ENCODE measurements at regions of chr11 and their contacts with region 1.

Region 1: DNA sequence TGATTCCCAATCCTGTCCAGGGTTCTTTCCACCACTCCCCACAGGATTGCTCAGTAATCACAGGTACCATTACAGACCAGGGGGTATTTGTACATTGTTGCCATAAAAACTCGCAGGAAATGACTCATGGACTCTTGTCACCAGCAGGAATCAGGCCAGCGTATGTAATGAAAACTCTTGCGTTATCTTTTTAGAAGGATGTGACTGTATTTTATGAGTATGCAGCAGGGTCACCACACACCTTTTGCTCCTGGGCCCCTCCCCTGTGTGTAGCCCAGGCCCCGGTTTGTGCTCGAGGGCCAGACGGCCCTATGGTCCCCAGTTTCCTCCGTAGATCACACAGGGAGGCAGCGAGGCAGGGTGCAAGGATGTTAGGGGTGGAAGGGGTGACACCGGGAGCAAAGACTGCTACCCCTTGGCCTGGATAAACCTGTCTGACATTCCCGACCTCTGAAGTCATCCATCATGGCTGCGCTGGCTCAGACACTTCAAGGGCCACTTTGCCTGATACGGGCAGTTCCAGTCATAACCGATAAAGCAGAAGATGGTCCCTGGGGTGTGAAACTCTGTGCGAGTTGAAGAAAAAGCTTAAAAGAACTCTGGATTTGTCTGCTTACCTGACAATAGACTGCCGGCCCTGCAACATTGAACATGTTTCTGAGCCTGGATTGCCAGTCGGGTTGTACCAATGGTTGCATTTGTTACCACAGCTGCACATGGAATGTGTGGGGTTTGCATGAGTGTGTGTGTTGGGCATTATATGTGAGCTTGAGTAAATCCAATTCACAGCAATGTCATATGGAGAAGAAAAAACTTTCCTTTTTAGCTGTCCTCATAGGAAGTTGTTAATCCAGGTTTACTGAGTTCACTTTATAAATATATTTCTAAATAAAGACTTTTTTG is 57.0 kb downstream of the MICAL2 start:
- DNase-seq: peak; percentile 98
- H3K4me3 ChIP-seq: no peak overlapping the region
- H3K27ac ChIP-seq: peak overlapping the region; percentile 95
- H3K4me1 ChIP-seq: peaks cover 68% of the 10 kb centered on the region
- H3K27me3 ChIP-seq: no peaks in the 10 kb centered on the region
- CTCF ChIP-seq: no peak

Region 2: DNA sequence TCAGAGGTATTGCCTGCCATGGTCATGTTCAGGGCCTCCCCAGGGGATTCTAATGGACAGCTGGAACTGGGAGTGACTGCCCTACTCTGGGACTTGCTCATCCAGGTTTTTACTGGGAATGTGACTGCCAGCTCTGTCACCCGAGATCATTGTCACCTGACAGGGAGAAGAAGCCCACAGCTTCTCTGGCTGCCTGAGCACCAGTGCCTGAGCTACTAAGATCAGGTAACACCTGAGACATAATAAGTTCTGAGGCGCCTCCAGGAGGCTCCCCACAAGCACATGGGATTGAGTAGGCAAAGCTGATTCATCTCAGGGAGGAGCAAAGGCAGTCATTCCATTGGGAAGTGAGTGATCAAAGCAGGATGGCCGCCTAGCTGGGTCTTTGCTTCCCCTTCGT is 461.3 kb before region 1 on chr11:
- CTCF ChIA-PET with region 1: no interaction called
- dilution Hi-C with region 1: no loop called
- in situ Hi-C with region 1: no loop called
- intact Hi-C with region 1: no loop called
- DNase-seq: peak; percentile 65
- H3K4me3 ChIP-seq: no peak overlapping the region
- H3K27ac ChIP-seq: no peak overlapping the region
- H3K4me1 ChIP-seq: peaks cover 4% of the 10 kb centered on the region
- H3K27me3 ChIP-seq: peaks cover 2% of the 10 kb centered on the region
- CTCF ChIP-seq: peak in 1 of 2 donors; percentile 27

Region 3: GRCh38 chr11:12182676-12183541 is 15.6 kb after region 1 on chr11:
- CTCF ChIA-PET with region 1: no interaction called
- dilution Hi-C with region 1: no loop called
- in situ Hi-C with region 1: no loop called
- intact Hi-C with region 1: loop called (anchors 2 kb)
- DNase-seq: peak; percentile 90
- H3K4me3 ChIP-seq: no peak overlapping the region
- H3K27ac ChIP-seq: peak overlapping the region; percentile 96
- H3K4me1 ChIP-seq: peaks cover 80% of the 10 kb centered on the region
- H3K27me3 ChIP-seq: no peaks in the 10 kb centered on the region
- CTCF ChIP-seq: no peak

Region 4: DNA sequence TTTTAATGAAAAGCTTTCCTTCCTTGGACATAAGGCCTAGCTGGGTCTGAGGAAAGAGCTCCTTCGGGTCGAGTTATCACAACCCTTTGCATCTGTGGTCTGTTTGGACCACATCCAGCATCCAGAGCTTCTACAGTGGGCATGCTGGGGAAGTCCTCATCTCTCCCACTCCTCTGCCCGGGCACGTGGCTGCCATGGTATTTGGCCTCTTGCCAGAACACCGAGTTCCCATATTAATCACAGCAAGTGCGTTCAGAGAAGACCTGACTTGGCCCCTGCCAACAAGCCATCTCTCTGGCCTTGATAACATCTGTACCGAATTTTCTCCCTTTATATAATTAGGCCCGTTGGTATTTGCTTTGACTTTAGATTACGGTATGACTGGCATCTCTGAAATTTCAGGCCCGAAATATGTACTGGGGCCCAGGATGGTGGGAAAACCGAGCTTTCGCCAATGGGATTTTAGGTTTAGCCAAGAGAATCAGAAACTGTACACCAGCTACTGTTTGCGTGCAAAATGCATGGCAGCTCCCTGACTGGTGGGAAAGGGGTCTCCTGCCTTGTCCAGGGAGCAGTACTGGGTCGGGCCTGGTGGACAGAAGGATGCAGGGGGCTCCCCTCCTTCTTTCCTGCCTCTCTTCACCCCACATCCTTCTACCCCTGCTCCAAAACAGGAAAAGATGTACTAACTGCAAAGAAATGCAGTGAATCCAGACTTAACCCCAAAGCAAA is 33.1 kb after region 1 on chr11:
- CTCF ChIA-PET with region 1: no interaction called
- dilution Hi-C with region 1: no loop called
- in situ Hi-C with region 1: no loop called
- intact Hi-C with region 1: loop called (anchors 5 kb)
- DNase-seq: peak; percentile 68
- H3K4me3 ChIP-seq: no peak overlapping the region
- H3K27ac ChIP-seq: peak overlapping the region; percentile 19
- H3K4me1 ChIP-seq: peaks cover 29% of the 10 kb centered on the region
- H3K27me3 ChIP-seq: no peaks in the 10 kb centered on the region
- CTCF ChIP-seq: no peak

Measured in mammary epithelial cell (primary cell).